Naive thymus-derived CD4-positive, alpha-beta T cell (primary cell): ENCODE measurements at regions of chr2 and their contacts with region 1.

Region 1: DNA sequence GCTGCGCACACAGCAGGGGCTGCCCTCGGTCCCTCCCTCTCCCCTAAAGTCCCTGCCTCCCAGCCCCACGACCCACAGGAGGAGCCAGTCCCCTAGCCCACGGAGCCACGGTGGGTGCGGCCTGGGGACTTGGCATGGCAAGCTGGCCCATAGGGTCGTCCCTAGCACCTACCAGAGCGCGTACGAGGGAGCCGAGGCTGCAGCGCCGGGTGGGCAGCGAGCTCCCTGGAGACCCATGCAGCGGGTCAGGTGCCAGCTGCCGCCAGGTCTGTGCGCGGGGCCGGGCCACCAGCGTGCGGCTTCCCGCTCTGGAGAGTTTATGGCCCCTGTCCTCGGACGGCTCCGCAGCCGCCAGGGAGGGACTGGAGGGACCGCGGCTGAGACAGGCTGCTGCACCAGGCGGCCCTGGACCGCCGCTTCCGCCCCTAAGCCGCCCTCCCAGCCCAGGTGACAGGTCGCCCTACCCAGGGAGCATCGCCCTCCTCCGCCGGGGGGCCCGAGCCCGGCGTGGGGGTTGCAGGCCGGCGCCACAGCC is 273.6 kb downstream of the CCDC74A start:
- DNase-seq: peak in 2 of 9 donors; percentile 3 to 9
- ATAC-seq: no peak
- H3K4me3 ChIP-seq: no peak overlapping the region
- H3K4me3 Mint-ChIP-seq: peak overlapping the region in 3 of 10 donors; percentile 17 to 38 (median 19)
- H3K27ac ChIP-seq: no peak overlapping the region
- H3K27ac Mint-ChIP-seq: no peak overlapping the region
- H3K4me1 ChIP-seq: no peaks in the 10 kb centered on the region
- H3K4me1 Mint-ChIP-seq: peaks cover 0 to 9% (median 0%) of the 10 kb centered on the region in 7 donors
- H3K27me3 ChIP-seq: no peaks in the 10 kb centered on the region
- H3K27me3 Mint-ChIP-seq: peaks cover 7 to 19% (median 14%) of the 10 kb centered on the region in 5 donors

Region 2: GRCh38 chr2:131682122-131682944 is 118.9 kb before region 1 on chr2:
- CTCF ChIA-PET with region 1: no interaction called
- POLR2A ChIA-PET with region 1: no interaction called
- intact Hi-C with region 1: loop called in 1 of 2 experiments (anchors 2 kb)
- DNase-seq: peak in 8 of 9 donors; percentile 47 to 73 (median 61)
- ATAC-seq: peak; percentile 95
- H3K4me3 ChIP-seq: peak overlapping the region; percentile 84
- H3K4me3 Mint-ChIP-seq: peak overlapping the region; percentile 79 to 93 (median 89)
- H3K27ac ChIP-seq: peak overlapping the region; percentile 52
- H3K27ac Mint-ChIP-seq: peak overlapping the region; percentile 67 to 92 (median 78)
- H3K4me1 ChIP-seq: no peaks in the 10 kb centered on the region
- H3K4me1 Mint-ChIP-seq: peaks cover 13 to 50% (median 29%) of the 10 kb centered on the region in 7 donors
- H3K27me3 ChIP-seq: no peaks in the 10 kb centered on the region
- H3K27me3 Mint-ChIP-seq: peaks cover 0 to 5% (median 0%) of the 10 kb centered on the region in 5 donors